ENCODE measurements at regions of chr14 and their contacts with region 1.

Region 1: DNA sequence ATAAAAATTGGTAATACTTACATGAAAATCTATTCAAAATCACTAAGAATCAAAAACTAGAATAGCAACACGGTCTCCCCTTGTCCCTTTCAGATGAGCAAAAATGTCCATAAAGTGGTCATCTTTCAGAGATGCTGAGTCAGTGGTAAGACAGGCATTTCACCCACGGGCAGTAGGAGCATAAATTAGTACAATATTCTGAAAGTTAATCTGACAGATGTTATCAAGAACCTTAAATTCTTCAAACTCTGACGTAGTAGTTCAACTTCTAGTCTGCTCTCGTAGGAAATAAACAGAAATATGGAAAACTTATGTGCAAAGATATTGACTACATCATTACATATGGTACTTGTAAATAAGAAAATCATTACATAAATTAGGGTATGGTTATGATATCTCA is 33.1 kb upstream of the GNPNAT1 start:
- DNase-seq: no peak
- H3K4me3 ChIP-seq: no peak overlapping the region
- H3K4me3 Mint-ChIP-seq: no peak overlapping the region
- H3K27ac Mint-ChIP-seq: no peak overlapping the region
- H3K4me1 ChIP-seq: peaks cover 4% of the 10 kb centered on the region; the same call in 1 of the 2 replicates
- H3K4me1 Mint-ChIP-seq: no peaks in the 10 kb centered on the region
- H3K27me3 ChIP-seq: no peaks in the 10 kb centered on the region
- H3K27me3 Mint-ChIP-seq: no peaks in the 10 kb centered on the region
- CTCF ChIP-seq: no peak

Region 2: GRCh38 chr14:52906071-52906601 is 81.6 kb after region 1 on chr14:
- CTCF ChIA-PET with region 1: no interaction called
- POLR2A ChIA-PET with region 1: no interaction called
- intact Hi-C with region 1: no loop called
- DNase-seq: no peak
- H3K4me3 ChIP-seq: no peak overlapping the region
- H3K4me3 Mint-ChIP-seq: no peak overlapping the region
- H3K27ac Mint-ChIP-seq: no peak overlapping the region
- H3K4me1 ChIP-seq: 0 out of 2 replicates have a peak, but pooled peaks cover 6% of the 10 kb centered on the region
- H3K4me1 Mint-ChIP-seq: peaks cover 14% of the 10 kb centered on the region
- H3K27me3 ChIP-seq: no peaks in the 10 kb centered on the region
- H3K27me3 Mint-ChIP-seq: no peaks in the 10 kb centered on the region
- CTCF ChIP-seq: no peak

Region 3: DNA sequence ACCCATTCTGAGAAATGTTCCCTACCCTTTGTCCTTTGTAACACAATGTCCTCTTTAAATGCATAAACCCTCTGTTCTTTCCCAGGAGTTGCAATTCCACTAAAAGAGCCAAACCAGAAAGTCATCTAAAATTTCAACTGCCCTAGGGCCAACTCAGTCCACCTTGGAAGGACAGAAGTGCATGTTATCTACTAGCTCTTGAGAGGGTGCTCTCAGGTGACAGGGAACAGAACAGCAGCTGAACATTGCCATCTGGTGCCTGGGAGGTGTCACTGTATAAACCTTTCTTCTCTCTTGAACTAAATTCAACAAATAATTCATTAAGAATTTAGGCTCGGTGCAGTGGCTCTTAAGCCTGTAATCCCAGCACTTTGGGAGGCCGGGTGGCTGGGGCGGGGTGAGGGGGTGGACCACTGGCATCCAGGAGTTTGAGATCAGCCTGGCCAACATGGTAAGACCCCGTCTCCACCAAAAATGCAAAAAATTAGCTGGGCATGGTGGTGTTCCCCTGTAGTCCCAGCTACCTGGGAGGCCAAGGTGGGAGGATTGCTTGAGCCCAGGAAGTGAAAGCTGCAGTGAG is 136.6 kb after region 1 on chr14:
- CTCF ChIA-PET with region 1: interaction called, 15 read pairs
- POLR2A ChIA-PET with region 1: no interaction called
- intact Hi-C with region 1: loop called (anchors 1 kb)
- DNase-seq: peak; percentile 67
- H3K4me3 ChIP-seq: no peak overlapping the region
- H3K4me3 Mint-ChIP-seq: no peak overlapping the region
- H3K27ac Mint-ChIP-seq: no peak overlapping the region
- H3K4me1 ChIP-seq: no peaks in the 10 kb centered on the region
- H3K4me1 Mint-ChIP-seq: peaks cover 11% of the 10 kb centered on the region
- H3K27me3 ChIP-seq: no peaks in the 10 kb centered on the region
- H3K27me3 Mint-ChIP-seq: peaks cover 2% of the 10 kb centered on the region
- CTCF ChIP-seq: peak; percentile 74

Region 4: GRCh38 chr14:53055003-53055402 is 230.5 kb after region 1 on chr14:
- CTCF ChIA-PET with region 1: no interaction called
- POLR2A ChIA-PET with region 1: no interaction called
- intact Hi-C with region 1: loop called (anchors 1 kb)
- DNase-seq: peak in 1 of 2 experiments; percentile 32
- H3K4me3 ChIP-seq: no peak overlapping the region
- H3K4me3 Mint-ChIP-seq: no peak overlapping the region
- H3K27ac Mint-ChIP-seq: no peak overlapping the region
- H3K4me1 ChIP-seq: no peaks in the 10 kb centered on the region
- H3K4me1 Mint-ChIP-seq: no peaks in the 10 kb centered on the region
- H3K27me3 ChIP-seq: no peaks in the 10 kb centered on the region
- H3K27me3 Mint-ChIP-seq: no peaks in the 10 kb centered on the region
- CTCF ChIP-seq: peak; percentile 62 to 63

Region 5: DNA sequence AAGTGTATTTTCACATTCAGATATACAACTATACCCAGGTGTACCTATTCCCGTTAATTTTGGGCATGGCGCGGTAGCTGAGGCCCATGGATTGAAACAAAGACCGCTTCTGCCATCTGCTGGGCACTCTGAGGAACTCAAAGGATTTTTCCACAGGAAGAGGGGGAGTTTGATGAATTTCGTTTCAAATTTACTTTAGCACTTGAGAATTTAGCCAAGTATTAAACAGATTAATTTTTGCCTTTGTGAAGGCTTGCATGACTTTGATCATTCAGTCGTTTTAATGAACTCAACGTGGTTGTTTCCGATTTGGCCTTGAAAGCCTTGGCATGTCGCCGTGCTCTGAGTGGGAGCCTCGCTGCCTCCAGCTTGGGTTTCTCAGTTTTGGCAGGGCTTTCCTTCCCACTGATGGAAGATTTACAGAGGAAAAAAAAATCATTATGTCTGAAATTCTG is 481.8 kb after region 1 on chr14:
- CTCF ChIA-PET with region 1: no interaction called
- POLR2A ChIA-PET with region 1: no interaction called
- intact Hi-C with region 1: loop called (anchors 5 kb)
- DNase-seq: peak; percentile 47 to 49
- H3K4me3 ChIP-seq: peak overlapping the region; percentile 18; the same call in 1 of the 2 replicates
- H3K4me3 Mint-ChIP-seq: peak overlapping the region; percentile 41
- H3K27ac Mint-ChIP-seq: no peak overlapping the region
- H3K4me1 ChIP-seq: no peaks in the 10 kb centered on the region
- H3K4me1 Mint-ChIP-seq: no peaks in the 10 kb centered on the region
- H3K27me3 ChIP-seq: no peaks in the 10 kb centered on the region; the same call in 1 of the 2 replicates
- H3K27me3 Mint-ChIP-seq: peaks cover 5% of the 10 kb centered on the region
- CTCF ChIP-seq: peak; percentile 65 to 82

Measured in Caco-2 (cell line).